Activated T-helper 2 cell treated with anti-CD3 and anti-CD28 coated beads, Interferon-gamma antibody, Interleukin-2, Interleukin-4, amounts not matched to agents 10 μg/mL and 5 μg/mL and 100 μg/mL, durations not matched to agents 14 hours and 24 hours and 36 hours (primary cell): ENCODE measurements at regions of chr2 and their contacts with region 1.

Region 1: DNA sequence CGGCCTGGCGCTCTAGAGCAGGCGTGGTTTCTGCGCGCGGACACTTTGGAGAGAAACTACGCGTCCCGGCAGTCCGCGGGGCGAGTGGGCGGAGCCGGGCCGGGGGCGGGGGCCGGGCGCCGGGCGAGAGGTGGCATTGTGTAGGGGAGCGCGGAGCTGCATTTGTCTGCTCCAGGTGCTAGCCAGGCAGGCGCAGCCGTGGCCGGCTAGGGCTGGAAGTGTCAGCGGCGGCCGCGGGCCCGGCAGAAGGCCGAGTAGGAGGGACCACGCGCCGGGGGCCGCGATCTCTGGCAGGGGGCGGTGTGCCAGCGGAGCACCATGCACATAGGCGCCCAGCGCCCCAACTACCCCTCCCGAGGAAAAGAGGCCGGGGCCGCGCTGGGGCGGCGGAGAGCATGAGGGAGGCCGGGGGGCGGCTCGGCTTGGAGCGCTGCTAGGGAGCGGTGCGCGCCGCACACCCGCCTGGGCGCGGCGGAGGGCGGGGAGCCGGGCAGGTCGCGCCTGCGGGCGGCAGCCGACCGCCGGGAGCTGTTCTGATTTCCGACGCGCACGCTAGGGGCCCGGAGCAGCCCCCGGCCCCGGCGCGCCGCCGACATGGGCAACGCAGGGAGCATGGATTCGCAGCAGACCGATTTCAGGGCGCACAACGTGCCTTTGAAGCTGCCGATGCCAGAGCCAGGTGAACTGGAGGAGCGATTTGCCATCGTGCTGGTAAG is at the start of gene FMNL2:
- DNase-seq: peak; percentile 55
- H3K4me3 Mint-ChIP-seq: peak within 1 kb of the TSS; percentile 90
- H3K27ac Mint-ChIP-seq: peak within 1 kb of the TSS; percentile 51
- H3K4me1 Mint-ChIP-seq: peaks cover 17% of the 10 kb centered on the region
- H3K27me3 Mint-ChIP-seq: peaks cover 39% of the 10 kb centered on the region
- total RNA-seq, gene FMNL2: 14.0 and 14.3 TPM in 2 replicates

Region 2: DNA sequence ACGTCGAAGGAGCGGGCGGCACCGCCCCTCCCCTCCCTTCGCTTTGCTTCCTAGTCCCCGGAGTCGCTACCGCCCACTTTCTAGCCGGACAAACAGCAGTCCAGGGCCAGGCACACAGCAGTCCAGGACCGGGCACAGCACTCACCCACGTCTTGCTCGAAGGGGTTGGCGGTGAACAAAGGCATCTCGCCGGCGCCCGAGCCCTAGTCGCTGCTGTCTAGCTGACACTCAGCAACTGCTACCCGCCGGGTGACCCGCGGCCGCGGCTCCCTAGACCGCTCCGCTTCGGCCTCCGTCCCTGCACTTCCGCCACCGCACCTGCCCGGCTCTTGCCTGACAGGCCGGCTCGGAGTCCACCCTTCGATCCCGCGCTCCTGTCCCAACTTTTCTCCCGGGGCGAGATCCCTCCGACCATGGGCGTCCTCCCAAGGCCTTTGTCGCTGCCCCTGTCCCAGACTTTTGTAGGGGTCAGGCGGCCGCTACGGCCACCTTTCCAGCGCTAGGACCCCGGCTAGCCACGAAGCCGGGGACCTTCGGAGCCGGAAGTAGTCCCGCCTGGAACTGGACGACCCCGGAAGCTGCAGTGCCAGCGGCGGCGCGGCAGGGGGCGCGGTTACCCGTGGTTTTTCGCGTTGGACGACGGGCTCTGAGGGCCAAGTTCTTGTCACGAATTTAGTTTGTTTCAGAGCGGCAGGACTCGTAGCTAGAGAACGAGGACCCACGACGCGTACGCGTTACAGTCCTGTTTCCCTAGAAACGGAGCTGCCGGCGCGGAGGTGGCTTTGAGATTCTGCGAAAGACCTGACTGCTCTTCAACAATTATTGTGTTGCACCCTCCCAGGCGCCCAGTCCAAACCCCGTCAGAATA is 159.5 kb before region 1 on chr2 and contains the start of gene STAM2:
- intact Hi-C with region 1: loop called (anchors 1 kb)
- DNase-seq: peak; percentile 91
- H3K4me3 Mint-ChIP-seq: peak within 1 kb of the TSS; percentile 92
- H3K27ac Mint-ChIP-seq: peak within 1 kb of the TSS; percentile 96
- H3K4me1 Mint-ChIP-seq: peaks cover 29% of the 10 kb centered on the region
- H3K27me3 Mint-ChIP-seq: peaks cover 2% of the 10 kb centered on the region
- total RNA-seq, gene STAM2: 14.3 and 15.9 TPM in 2 replicates

Region 3: GRCh38 chr2:152415231-152415642 is 80.1 kb after region 1 on chr2:
- intact Hi-C with region 1: loop called (anchors 1 kb)
- DNase-seq: no peak
- H3K4me3 Mint-ChIP-seq: peak overlapping the region; percentile 8
- H3K27ac Mint-ChIP-seq: peak overlapping the region; percentile 88
- H3K4me1 Mint-ChIP-seq: peaks cover 53% of the 10 kb centered on the region
- H3K27me3 Mint-ChIP-seq: peaks cover 2% of the 10 kb centered on the region

Region 4: GRCh38 chr2:152558158-152558984 is 223.2 kb after region 1 on chr2:
- intact Hi-C with region 1: loop called (anchors 5 kb)
- DNase-seq: no peak
- H3K4me3 Mint-ChIP-seq: no peak overlapping the region
- H3K27ac Mint-ChIP-seq: no peak overlapping the region
- H3K4me1 Mint-ChIP-seq: peaks cover 11% of the 10 kb centered on the region
- H3K27me3 Mint-ChIP-seq: peaks cover 9% of the 10 kb centered on the region

Region 5: GRCh38 chr2:152635635-152636298 is 300.6 kb after region 1 on chr2:
- intact Hi-C with region 1: loop called (anchors 5 kb)
- DNase-seq: peak; percentile 46
- H3K4me3 Mint-ChIP-seq: no peak overlapping the region
- H3K27ac Mint-ChIP-seq: no peak overlapping the region
- H3K4me1 Mint-ChIP-seq: no peaks in the 10 kb centered on the region
- H3K27me3 Mint-ChIP-seq: no peaks in the 10 kb centered on the region